ENCODE measurements at regions of chr2 and their contacts with region 1.

Region 1: GRCh38 chr2:207625018-207625907 is at the start of gene METTL21A:
- DNase-seq: peak; percentile 92 to 97
- H3K4me3 ChIP-seq: peak within 1 kb of the TSS; percentile 73 to 92 (median 91)
- H3K27ac ChIP-seq: peak within 1 kb of the TSS; percentile 93 to 99 (median 96)
- H3K4me1 ChIP-seq: peaks cover 21 to 44% (median 32%) of the 10 kb centered on the region in 4 donors
- H3K27me3 ChIP-seq: no peaks in the 10 kb centered on the region
- CTCF ChIP-seq: peak in 5 of 7 experiments; percentile 8 to 41 (median 38)
- EP300 ChIP-seq: no peak
- POLR2A ChIP-seq: peak in 1 of 4 donors; percentile 5
- total RNA-seq, gene METTL21A: 13.0 to 42.9 (median 27.5) TPM

Region 2: DNA sequence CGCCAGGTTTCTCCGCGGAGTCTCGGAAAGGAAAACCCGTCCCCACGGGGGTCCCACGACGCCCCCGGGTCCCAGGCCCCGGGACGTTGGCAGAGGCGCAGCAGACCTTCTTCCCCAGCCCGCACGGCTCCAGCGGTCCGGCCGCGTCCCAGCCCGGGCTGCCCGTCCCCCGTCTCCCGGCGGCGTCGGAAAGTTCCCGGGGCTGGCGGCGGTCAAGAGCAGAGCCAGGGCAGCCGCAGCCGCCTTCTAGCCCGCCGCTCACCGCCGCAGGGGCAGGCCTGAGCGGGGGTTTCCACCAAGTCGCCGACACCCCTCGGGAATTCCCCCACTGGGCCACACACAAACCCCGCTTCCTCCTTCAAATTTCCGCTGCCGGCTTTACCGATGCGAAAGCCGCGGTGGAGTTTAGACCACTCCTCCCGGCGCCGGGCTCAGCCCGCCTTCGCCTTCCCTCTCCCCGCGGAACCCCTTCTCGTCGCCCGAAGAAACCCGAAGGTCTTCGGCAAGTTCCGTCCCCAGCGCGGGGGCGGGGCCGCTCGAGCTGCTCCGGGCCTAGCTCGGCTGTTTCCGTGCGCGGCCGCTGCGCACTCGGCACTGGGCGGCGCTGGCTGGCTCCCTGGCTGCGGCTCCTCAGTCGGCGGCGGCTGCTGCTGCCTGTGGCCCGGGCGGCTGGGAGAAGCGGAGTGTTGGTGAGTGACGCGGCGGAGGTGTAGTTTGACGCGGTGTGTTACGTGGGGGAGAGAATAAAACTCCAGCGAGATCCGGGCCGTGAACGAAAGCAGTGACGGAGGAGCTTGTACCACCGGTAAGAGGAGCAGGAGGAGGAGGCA is 95.7 kb before region 1 on chr2 and contains the start of gene CREB1:
- intact Hi-C with region 1: loop called (anchors 10 kb)
- DNase-seq: peak; percentile 99 to 100
- H3K4me3 ChIP-seq: peak within 1 kb of the TSS; percentile 64 to 90 (median 74)
- H3K27ac ChIP-seq: peak within 1 kb of the TSS; percentile 97 to 99 (median 98)
- H3K4me1 ChIP-seq: peaks cover 34 to 53% (median 47%) of the 10 kb centered on the region in 4 donors
- H3K27me3 ChIP-seq: no peaks in the 10 kb centered on the region
- CTCF ChIP-seq: no peak
- EP300 ChIP-seq: peak; percentile 4
- POLR2A ChIP-seq: peak in 3 of 4 donors; percentile 64 to 95 (median 95)
- total RNA-seq, gene CREB1: 14.0 to 58.6 (median 20.0) TPM

Region 3: DNA sequence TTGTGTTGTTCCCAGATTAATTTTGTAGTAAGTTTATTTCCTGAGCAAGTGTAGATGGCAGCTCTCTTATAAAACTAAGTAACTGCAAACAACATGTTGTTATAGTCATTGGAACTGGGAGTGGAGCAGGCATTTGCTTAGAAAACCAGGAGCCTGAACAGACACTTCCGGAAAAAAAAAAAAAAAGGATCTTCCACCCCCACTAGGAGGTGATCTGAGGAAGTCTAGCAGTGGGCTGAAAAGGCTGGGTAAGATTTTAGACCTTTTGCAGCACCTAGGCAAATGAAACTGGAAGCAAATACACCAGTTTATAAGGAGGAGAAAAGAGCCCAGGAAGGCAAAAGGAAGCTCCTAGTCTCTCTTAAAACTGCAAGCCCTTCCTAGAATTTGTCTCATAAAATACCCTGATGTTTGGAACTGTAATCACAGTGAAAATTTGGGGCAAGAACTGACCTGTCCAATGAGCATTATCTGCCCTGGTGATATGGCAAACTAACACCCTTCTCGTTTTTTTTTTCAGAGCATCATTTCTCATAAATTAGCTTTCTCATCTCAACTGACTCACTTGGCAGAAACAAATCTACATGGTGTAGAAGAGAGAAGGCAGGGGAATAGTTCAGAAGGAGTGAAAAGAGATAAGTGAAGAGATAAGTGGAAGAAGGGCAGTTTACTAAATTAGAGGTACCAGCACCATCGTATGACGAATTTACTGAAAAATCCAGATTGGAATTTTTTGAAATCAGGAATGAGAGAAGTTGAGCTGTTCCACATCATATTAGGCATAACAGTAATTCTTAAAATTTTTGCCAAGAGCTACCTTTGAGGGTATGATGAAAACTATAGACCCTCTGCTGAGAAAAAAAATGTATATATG is 81.9 kb after region 1 on chr2:
- intact Hi-C with region 1: loop called (anchors 10 kb)
- DNase-seq: no peak
- H3K4me3 ChIP-seq: no peak overlapping the region
- H3K27ac ChIP-seq: no peak overlapping the region
- H3K4me1 ChIP-seq: peaks cover 5 to 22% (median 9%) of the 10 kb centered on the region in 4 donors
- H3K27me3 ChIP-seq: no peaks in the 10 kb centered on the region
- CTCF ChIP-seq: no peak
- EP300 ChIP-seq: no peak
- POLR2A ChIP-seq: no peak